ENCODE measurements at regions of chr1 and their contacts with region 1.

Region 1: DNA sequence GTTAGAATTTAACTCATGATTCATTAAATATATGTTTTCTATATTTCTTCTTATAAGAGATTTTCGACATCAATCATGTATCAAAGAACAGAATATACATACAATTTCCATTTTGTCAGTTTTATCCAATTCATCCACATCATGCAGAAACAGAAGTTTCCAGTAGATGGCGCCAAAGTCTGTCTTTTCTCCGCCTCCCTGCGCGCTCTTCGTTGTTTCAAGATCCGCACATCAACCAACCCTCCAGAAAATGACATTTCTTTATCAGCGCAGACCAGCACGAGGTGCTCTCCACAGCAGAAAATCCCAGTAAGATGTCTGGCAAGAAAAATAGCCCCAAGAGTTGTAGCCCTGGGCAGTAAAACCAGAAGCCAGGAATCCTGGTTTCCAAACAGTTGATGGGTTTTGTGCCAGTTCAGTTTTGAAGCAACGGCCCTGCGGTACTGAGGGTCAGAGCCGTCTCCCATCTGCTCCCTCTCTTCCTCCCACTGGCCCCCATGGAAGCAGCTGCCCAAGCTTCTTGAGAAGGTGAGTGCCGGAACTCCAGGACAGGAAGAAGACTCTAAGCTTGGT is 38.6 kb upstream of the GPR137B start:
- DNase-seq: peak; percentile 31 to 83
- ATAC-seq: peak; percentile 41 to 72 (median 71)
- H3K4me3 ChIP-seq: no peak overlapping the region
- H3K4me3 Mint-ChIP-seq: no peak overlapping the region
- H3K27ac ChIP-seq: no peak overlapping the region
- H3K27ac Mint-ChIP-seq: no peak overlapping the region
- H3K4me1 ChIP-seq: peaks cover 3% of the 10 kb centered on the region
- H3K4me1 Mint-ChIP-seq: peaks cover 5% of the 10 kb centered on the region in 2 donors
- H3K27me3 ChIP-seq: no peaks in the 10 kb centered on the region
- H3K27me3 Mint-ChIP-seq: no peaks in the 10 kb centered on the region
- CTCF ChIP-seq: peak; percentile 91

Region 2: DNA sequence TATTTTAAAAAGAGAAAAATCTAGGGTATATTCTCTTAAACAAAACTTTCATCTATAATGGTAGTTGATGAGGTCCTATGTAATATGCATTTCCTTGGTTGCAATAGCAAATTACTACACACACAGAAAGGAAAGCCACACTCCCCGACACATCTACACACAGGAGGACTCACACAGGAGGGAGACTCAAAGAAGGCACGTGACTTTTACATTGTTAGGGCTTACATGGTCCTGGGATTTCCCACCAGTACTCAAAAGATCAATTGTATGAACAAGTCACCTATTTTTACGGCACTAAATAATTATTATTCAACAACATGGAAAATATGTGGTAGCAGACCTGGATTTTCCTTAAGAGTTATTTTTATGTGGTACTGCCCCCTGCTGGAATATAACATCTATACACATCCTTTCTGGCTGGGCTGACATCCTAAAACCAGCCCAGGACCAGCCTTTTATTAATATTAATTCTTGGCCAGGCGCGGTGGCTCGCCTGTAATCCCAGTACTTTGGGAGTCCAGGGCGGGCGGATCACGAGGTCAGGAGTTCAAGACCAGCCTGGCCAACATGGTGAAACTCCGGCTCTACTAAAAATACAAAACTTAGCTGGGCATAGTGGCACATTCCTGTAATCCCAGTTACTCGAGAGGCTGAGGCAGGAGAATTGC is 386.1 kb after region 1 on chr1:
- intact Hi-C with region 1: loop called (anchors 1 kb)
- DNase-seq: peak in 1 of 2 donors; percentile 73
- ATAC-seq: peak; percentile 56 to 70 (median 62)
- H3K4me3 ChIP-seq: no peak overlapping the region
- H3K4me3 Mint-ChIP-seq: no peak overlapping the region
- H3K27ac ChIP-seq: no peak overlapping the region
- H3K27ac Mint-ChIP-seq: no peak overlapping the region
- H3K4me1 ChIP-seq: peaks cover 4% of the 10 kb centered on the region
- H3K4me1 Mint-ChIP-seq: peaks cover 0 to 7% of the 10 kb centered on the region in 2 donors
- H3K27me3 ChIP-seq: no peaks in the 10 kb centered on the region
- H3K27me3 Mint-ChIP-seq: peaks cover 17 to 25% of the 10 kb centered on the region in 2 donors
- CTCF ChIP-seq: peak; percentile 79

Region 3: DNA sequence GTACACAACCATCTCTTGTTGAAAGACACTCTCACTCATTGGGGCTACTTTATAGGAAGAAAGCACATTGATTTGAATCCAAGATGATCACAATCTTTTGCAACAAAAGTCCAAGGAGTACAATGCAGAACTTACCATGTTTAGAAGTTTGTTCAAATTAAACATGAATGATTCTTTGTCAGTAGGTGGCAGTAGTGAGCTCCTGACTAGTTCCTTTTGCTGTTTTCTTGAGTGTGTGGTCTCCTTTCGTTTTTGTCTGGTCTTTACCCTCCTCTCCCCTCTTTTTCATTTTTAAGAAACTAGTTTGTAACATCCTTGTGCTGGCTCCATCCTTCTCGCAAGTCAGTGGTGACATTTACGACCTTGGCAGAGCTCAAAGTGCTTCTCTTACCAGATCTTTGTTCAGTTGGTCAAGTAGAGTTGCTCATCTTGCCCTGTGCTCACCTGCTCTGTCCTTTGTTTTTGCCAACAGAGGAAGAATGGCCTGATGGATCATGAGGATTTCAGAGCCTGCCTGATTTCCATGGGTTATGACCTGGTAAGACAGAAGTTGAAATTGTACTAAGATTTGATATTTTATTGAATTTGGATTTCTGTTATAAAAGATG is 655.6 kb after region 1 on chr1:
- intact Hi-C with region 1: loop called (anchors 10 kb)
- DNase-seq: peak in 1 of 2 donors; percentile 76
- ATAC-seq: peak in 2 of 3 donors; percentile 47 to 67
- H3K4me3 ChIP-seq: no peak overlapping the region
- H3K4me3 Mint-ChIP-seq: no peak overlapping the region
- H3K27ac ChIP-seq: no peak overlapping the region
- H3K27ac Mint-ChIP-seq: no peak overlapping the region
- H3K4me1 ChIP-seq: no peaks in the 10 kb centered on the region
- H3K4me1 Mint-ChIP-seq: peaks cover 0 to 5% of the 10 kb centered on the region in 2 donors
- H3K27me3 ChIP-seq: no peaks in the 10 kb centered on the region
- H3K27me3 Mint-ChIP-seq: peaks cover 4 to 12% of the 10 kb centered on the region in 2 donors
- CTCF ChIP-seq: peak; percentile 82

Region 4: GRCh38 chr1:236868625-236869467 is 765.1 kb after region 1 on chr1:
- intact Hi-C with region 1: loop called (anchors 1 kb)
- DNase-seq: peak; percentile 24 to 79
- ATAC-seq: peak; percentile 67 to 78 (median 72)
- H3K4me3 ChIP-seq: no peak overlapping the region
- H3K4me3 Mint-ChIP-seq: no peak overlapping the region
- H3K27ac ChIP-seq: no peak overlapping the region
- H3K27ac Mint-ChIP-seq: peak overlapping the region in 1 of 2 donors; percentile 22
- H3K4me1 ChIP-seq: no peaks in the 10 kb centered on the region
- H3K4me1 Mint-ChIP-seq: peaks cover 0 to 4% of the 10 kb centered on the region in 2 donors
- H3K27me3 ChIP-seq: no peaks in the 10 kb centered on the region
- H3K27me3 Mint-ChIP-seq: no peaks in the 10 kb centered on the region
- CTCF ChIP-seq: peak; percentile 97

Region 5: GRCh38 chr1:237562242-237562823 is 1458.6 kb after region 1 on chr1:
- intact Hi-C with region 1: loop called (anchors 5 kb)
- DNase-seq: peak in 1 of 2 donors; percentile 66
- ATAC-seq: peak in 2 of 3 donors; percentile 34 to 64
- H3K4me3 ChIP-seq: no peak overlapping the region
- H3K4me3 Mint-ChIP-seq: no peak overlapping the region
- H3K27ac ChIP-seq: no peak overlapping the region
- H3K27ac Mint-ChIP-seq: no peak overlapping the region
- H3K4me1 ChIP-seq: no peaks in the 10 kb centered on the region
- H3K4me1 Mint-ChIP-seq: no peaks in the 10 kb centered on the region
- H3K27me3 ChIP-seq: no peaks in the 10 kb centered on the region
- H3K27me3 Mint-ChIP-seq: peaks cover 0 to 5% of the 10 kb centered on the region in 2 donors
- CTCF ChIP-seq: peak; percentile 79

Measured in natural killer cell (primary cell).